ENCODE measurements at regions of chr1 and their contacts with region 1.

Region 1: DNA sequence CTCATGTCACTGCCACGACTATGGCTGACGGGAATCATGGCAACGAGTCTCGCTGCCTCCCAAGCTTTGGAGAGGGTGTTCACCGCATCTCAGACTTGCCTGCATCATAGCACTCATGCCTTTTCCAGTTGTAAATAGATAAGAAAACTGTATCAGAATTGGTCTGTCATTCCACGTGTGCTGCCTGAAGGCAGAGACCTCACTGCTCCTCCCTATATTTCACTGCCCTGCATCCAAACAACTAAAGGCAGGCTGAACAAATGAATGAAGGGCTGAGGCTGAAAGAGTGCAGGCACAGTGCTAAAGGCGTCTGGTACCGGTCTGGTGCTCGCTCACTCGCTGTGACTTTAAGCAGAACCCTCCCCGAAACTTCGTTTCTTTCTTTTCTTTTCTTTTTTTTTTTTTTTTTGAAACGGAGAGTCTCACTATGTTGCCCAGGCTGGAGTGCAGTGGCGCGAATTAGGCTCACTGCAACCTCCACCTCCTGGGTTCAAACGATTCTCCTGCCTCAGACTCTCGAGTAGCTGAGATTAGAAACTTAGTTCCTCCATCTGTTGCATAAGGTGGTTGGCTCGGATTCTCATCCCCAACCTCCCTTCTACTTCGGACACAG is 542 bp downstream of the EIF2B3 start:
- DNase-seq: no peak
- H3K4me3 ChIP-seq: peak overlapping the region; percentile 69 to 70
- H3K27ac ChIP-seq: peak overlapping the region; percentile 27
- H3K4me1 ChIP-seq: peaks cover 18% of the 10 kb centered on the region
- H3K27me3 ChIP-seq: no peaks in the 10 kb centered on the region
- CTCF ChIP-seq: no peak
- POLR2A ChIP-seq: no peak

Region 2: GRCh38 chr1:44786138-44786840 is 199.6 kb before region 1 on chr1:
- intact Hi-C with region 1: loop called (anchors 5 kb)
- DNase-seq: no peak
- H3K4me3 ChIP-seq: peak overlapping the region; percentile 48 to 66
- H3K27ac ChIP-seq: peak overlapping the region; percentile 66
- H3K4me1 ChIP-seq: peaks cover 33% of the 10 kb centered on the region
- H3K27me3 ChIP-seq: no peaks in the 10 kb centered on the region
- CTCF ChIP-seq: peak; percentile 96 to 97 (median 96)
- POLR2A ChIP-seq: no peak

Region 3: GRCh38 chr1:45018599-45019230 is 32.9 kb after region 1 on chr1:
- intact Hi-C with region 1: no loop called
- DNase-seq: no peak
- H3K4me3 ChIP-seq: no peak overlapping the region
- H3K27ac ChIP-seq: no peak overlapping the region
- H3K4me1 ChIP-seq: peaks cover 7% of the 10 kb centered on the region
- H3K27me3 ChIP-seq: no peaks in the 10 kb centered on the region
- CTCF ChIP-seq: peak; percentile 35 to 44 (median 38)
- POLR2A ChIP-seq: no peak